Heart right ventricle (tissue), 16 donors: ENCODE measurements at regions of chr7 and their contacts with region 1.

Region 1: GRCh38 chr7:101815835-101816493 is 1.5 kb upstream of the CUX1 start:
- DNase-seq: peak; percentile 74 to 76
- ATAC-seq: peak; percentile 75 to 86 (median 78)
- H3K4me3 ChIP-seq: peak overlapping the region in 9 of 10 donors; percentile 55 to 91 (median 81)
- H3K27ac ChIP-seq: peak overlapping the region; percentile 50 to 87 (median 76)
- H3K4me1 ChIP-seq: peaks cover 5 to 51% (median 35%) of the 10 kb centered on the region in 9 donors
- H3K27me3 ChIP-seq: peaks cover 0 to 7% (median 0%) of the 10 kb centered on the region in 7 donors
- CTCF ChIP-seq: peak in 5 of 9 donors; percentile 5 to 40 (median 34)

Region 2: DNA sequence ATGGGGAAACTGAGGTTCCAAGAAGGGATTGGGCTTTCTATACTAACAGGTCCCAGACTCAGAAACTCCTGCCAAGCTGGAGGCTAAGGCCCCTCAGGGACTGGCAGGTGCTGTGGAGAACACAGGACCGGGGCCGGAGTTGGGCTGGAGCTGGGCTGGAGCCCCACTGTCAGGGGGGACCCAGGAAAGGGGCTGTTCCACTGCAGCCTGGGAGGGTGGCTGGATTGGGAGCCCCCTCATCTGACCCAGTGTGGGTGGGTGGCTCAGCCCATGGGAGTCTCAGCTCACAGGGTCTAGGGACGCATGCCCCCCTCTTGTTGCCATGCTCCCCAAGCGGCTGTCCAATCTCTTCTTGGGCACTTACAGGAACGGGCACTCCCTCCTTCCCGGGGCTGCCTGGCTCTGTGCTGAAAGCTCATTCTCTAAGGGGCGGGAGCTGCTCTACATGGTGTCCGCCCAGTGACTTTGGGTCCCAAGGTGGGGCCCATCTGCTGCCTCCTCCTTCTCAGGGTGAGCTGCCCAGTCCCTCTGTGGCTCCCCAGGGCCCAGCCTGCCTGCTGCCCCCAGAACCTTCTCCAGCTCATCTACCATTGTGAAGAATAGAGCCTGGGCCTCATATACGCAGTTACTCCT is 313.4 kb before region 1 on chr7:
- intact Hi-C with region 1: no loop called
- DNase-seq: no peak
- ATAC-seq: peak in 1 of 8 donors; percentile 24
- H3K4me3 ChIP-seq: no peak overlapping the region
- H3K27ac ChIP-seq: no peak overlapping the region
- H3K4me1 ChIP-seq: no peaks in the 10 kb centered on the region
- H3K27me3 ChIP-seq: peaks cover 0 to 8% (median 5%) of the 10 kb centered on the region in 7 donors
- CTCF ChIP-seq: no peak

Region 3: DNA sequence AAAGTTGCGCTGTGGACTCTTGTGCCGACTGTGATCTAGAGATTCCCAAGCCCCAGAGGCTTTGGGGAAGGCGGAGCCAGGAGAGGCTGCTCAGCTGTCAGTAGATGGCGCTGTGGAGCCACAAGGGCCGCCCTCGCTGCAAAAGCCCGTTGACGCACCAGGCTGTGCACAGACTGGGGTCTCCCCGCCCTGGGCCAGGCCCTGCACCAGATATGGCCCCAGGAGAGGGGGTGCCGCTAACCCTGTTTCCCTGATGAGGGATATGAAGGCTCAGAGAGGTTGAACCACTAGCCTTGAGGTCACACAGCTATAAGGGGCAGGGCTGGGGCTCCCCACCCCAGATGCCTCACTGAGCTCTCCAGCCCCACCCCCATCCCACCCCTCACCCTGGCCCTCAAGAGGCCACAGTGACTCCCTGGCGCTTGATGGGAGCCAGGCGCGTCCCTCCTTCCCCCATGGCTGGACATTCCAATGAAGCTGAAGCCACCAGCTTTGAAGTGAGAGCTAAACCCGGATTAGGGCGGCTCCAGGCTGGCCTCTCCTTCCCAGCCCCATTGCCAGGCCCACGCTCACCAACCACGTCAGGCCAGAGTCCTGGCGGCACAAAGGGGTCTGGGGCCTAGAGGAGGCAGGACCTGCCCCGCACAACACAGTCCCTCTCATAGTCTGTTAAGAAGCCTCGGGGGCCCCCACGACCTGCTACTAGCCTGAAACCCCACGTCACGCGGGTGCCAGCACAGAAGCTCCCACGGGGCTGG is 213.3 kb before region 1 on chr7:
- intact Hi-C with region 1: loop called in 3 of 10 experiments (anchors 5 to 10 kb)
- DNase-seq: peak; percentile 77 to 79
- ATAC-seq: peak; percentile 84 to 92 (median 88)
- H3K4me3 ChIP-seq: no peak overlapping the region
- H3K27ac ChIP-seq: no peak overlapping the region
- H3K4me1 ChIP-seq: peaks cover 0 to 15% (median 4%) of the 10 kb centered on the region in 9 donors
- H3K27me3 ChIP-seq: peaks cover 0 to 12% (median 0%) of the 10 kb centered on the region in 7 donors
- CTCF ChIP-seq: peak; percentile 78 to 97 (median 90)

Region 4: DNA sequence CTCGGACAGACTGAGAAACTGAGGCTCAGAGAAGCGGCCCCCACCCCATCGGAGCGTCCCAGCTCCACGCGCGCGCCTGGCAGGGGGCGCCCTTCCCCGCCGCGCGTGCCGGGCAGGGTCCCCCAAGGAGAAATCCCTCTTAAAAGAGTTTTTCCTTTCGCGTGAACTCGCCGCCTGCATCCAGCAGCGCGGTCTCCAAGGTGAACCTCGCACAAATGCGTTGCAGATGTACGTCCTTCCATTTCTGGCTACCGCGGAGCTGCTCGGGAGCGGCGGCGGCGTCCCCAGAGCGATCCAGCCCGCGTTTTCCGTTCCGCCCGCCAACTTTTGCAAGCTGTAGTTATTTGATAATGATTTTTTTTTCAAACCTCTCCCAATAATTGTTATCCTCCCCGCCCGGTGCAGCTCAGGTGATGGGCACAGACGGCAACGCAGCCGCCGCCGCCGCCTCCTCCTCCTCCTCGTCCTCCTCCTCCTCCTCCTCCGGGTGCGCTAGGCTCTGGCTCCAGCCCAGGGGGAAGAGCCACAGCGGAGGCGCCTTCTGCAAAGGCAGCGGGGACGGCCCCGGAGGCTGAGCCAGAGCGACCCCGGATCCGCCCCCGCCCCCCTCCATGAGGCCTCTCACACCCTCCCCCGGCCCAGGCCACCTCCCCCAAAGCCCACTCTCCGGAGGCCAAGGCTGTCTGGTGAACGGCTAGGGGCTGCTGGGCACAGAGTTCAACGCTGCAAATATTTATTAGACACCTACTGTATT is 72.5 kb before region 1 on chr7:
- intact Hi-C with region 1: loop called in 7 of 10 experiments (anchors 2 to 10 kb)
- DNase-seq: peak; percentile 47 to 54
- ATAC-seq: peak; percentile 57 to 72 (median 70)
- H3K4me3 ChIP-seq: peak overlapping the region; percentile 19 to 62 (median 55)
- H3K27ac ChIP-seq: no peak overlapping the region
- H3K4me1 ChIP-seq: peaks cover 0 to 36% (median 6%) of the 10 kb centered on the region in 9 donors
- H3K27me3 ChIP-seq: peaks cover 4 to 35% (median 24%) of the 10 kb centered on the region in 7 donors
- CTCF ChIP-seq: peak; percentile 20 to 80 (median 66)

Region 5: DNA sequence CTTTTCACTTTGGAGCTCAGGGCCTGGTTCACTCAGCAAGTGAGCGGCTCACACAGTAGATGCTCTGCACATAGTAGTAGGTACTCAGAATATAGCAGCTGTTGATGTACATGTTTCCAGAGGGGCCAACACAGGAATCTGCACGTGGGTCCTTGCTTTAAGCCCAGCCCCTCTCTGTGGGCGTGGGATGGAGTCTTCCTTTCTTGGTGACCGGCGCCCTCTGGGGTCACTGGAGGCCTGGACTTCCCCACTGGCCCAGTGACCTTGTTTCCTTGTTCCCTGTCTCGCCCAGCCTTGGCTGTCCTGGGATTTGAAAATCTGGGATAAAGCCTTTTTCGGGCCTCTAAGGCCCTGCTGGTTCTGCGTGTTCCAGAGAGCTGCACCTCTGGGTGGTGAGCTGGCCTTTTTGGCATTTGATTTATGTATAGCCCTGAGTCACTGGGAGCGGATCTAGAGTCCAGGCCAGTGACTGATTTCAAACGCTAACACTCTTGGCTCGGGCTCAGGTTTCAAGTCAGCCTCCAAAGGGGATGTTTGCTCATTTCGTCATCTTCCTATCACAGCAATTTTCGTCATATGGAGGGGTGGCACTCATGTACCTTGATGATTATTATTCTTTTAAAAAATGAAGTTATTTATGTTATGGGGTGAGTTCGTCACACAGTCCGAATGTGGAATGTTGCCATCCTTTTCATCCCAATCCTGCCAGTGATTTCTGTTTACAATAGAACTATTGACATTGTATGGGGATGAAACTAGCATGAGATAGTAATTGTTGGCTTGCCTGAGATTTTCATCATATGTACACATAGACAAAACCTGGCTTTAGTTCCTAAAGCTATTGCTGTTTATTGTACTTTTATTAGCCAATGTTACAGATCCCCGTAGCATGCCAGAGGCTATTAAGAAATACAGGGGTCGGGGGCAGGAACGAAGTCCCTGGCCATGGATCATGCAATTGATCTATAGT is 66.9 kb after region 1 on chr7:
- intact Hi-C with region 1: loop called in 2 of 10 experiments (anchors 10 kb)
- DNase-seq: peak; percentile 68 to 87
- ATAC-seq: peak; percentile 87 to 96 (median 92)
- H3K4me3 ChIP-seq: peak overlapping the region in 1 of 10 donors; percentile 6
- H3K27ac ChIP-seq: peak overlapping the region; percentile 47 to 92 (median 88)
- H3K4me1 ChIP-seq: peaks cover 17 to 84% (median 63%) of the 10 kb centered on the region in 9 donors
- H3K27me3 ChIP-seq: no peaks in the 10 kb centered on the region
- CTCF ChIP-seq: peak in 3 of 9 donors; percentile 19 to 32 (median 30)

Region 6: GRCh38 chr7:101900103-101900502 is 84.1 kb after region 1 on chr7:
- intact Hi-C with region 1: no loop called
- DNase-seq: peak; percentile 66 to 70
- ATAC-seq: peak; percentile 67 to 85 (median 80)
- H3K4me3 ChIP-seq: peak overlapping the region in 6 of 10 donors; percentile 4 to 29 (median 25)
- H3K27ac ChIP-seq: peak overlapping the region in 8 of 10 donors; percentile 26 to 80 (median 65)
- H3K4me1 ChIP-seq: peaks cover 17 to 74% (median 62%) of the 10 kb centered on the region in 9 donors
- H3K27me3 ChIP-seq: no peaks in the 10 kb centered on the region
- CTCF ChIP-seq: peak in 2 of 9 donors; percentile 12 to 23

Region 7: GRCh38 chr7:102125127-102125561 is 309.2 kb after region 1 on chr7:
- intact Hi-C with region 1: loop called in 1 of 10 experiments (anchors 10 kb)
- DNase-seq: peak; percentile 51 to 56
- ATAC-seq: peak; percentile 81 to 94 (median 88)
- H3K4me3 ChIP-seq: no peak overlapping the region
- H3K27ac ChIP-seq: peak overlapping the region in 3 of 10 donors; percentile 22 to 51 (median 26)
- H3K4me1 ChIP-seq: peaks cover 0 to 22% (median 4%) of the 10 kb centered on the region in 9 donors
- H3K27me3 ChIP-seq: no peaks in the 10 kb centered on the region
- CTCF ChIP-seq: peak in 5 of 9 donors; percentile 9 to 48 (median 43)

Region 8: GRCh38 chr7:102169651-102170392 is 353.9 kb after region 1 on chr7:
- intact Hi-C with region 1: loop called in 1 of 10 experiments (anchors 10 kb)
- DNase-seq: peak in 1 of 2 donors; percentile 14
- ATAC-seq: peak in 2 of 8 donors; percentile 8 to 26
- H3K4me3 ChIP-seq: peak overlapping the region in 6 of 10 donors; percentile 6 to 34 (median 24)
- H3K27ac ChIP-seq: peak overlapping the region in 7 of 10 donors; percentile 5 to 52 (median 16)
- H3K4me1 ChIP-seq: peaks cover 0 to 18% (median 6%) of the 10 kb centered on the region in 9 donors
- H3K27me3 ChIP-seq: no peaks in the 10 kb centered on the region
- CTCF ChIP-seq: no peak

Region 9: GRCh38 chr7:102236592-102237287 is 420.8 kb after region 1 on chr7:
- intact Hi-C with region 1: loop called in 6 of 10 experiments (anchors 5 to 10 kb)
- DNase-seq: peak; percentile 47 to 54
- ATAC-seq: peak; percentile 59 to 85 (median 80)
- H3K4me3 ChIP-seq: no peak overlapping the region
- H3K27ac ChIP-seq: no peak overlapping the region
- H3K4me1 ChIP-seq: peaks cover 0 to 21% (median 6%) of the 10 kb centered on the region in 9 donors
- H3K27me3 ChIP-seq: no peaks in the 10 kb centered on the region
- CTCF ChIP-seq: peak; percentile 59 to 87 (median 81)